ENCODE measurements at regions of chr22 and their contacts with region 1.

Region 1: GRCh38 chr22:17578136-17578754 is 14.9 kb downstream of the SLC25A18 start:
- DNase-seq: peak; percentile 74
- ATAC-seq: peak; percentile 47

Region 2: DNA sequence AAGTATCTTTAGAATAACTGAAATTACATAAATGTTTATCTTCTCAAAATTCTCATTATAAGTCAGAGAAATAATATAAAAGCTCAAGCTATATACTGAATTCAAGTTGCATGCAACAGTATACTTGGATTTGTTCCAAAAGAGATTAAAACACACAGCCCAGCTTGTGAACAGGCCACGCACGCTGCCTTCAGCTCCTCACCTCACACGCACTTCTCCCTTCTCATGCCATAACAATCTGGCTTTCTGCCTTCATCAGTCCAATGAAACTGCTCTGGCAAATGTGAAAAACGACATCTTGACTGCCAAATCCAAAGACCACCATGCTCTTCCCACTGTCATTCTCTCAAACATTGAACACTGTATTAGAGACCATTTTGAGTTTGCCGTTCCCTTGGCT is 28.3 kb after region 1 on chr22:
- intact Hi-C with region 1: loop called (anchors 2 kb)
- DNase-seq: no peak
- ATAC-seq: peak; percentile 66

Region 3: GRCh38 chr22:17781319-17782031 is 203.2 kb after region 1 on chr22:
- intact Hi-C with region 1: no loop called
- DNase-seq: no peak
- ATAC-seq: no peak

Measured in Right ventricle myocardium inferior (tissue), 1 donor.